Testis (tissue), 5 donors: ENCODE measurements at regions of chr5 and their contacts with region 1.

Region 1: GRCh38 chr5:32585446-32586275 is at the start of gene SUB1:
- DNase-seq: peak; percentile 95
- H3K4me3 ChIP-seq: peak within 1 kb of the TSS; percentile 100
- H3K27ac ChIP-seq: peak within 1 kb of the TSS; percentile 100
- H3K4me1 ChIP-seq: peaks cover 15% of the 10 kb centered on the region
- H3K27me3 ChIP-seq: no peaks in the 10 kb centered on the region
- CTCF ChIP-seq: peak in 1 of 3 experiments; percentile 9
- POLR2A ChIP-seq: peak; percentile 68
- total RNA-seq, gene SUB1: 147 to 210 TPM

Region 2: DNA sequence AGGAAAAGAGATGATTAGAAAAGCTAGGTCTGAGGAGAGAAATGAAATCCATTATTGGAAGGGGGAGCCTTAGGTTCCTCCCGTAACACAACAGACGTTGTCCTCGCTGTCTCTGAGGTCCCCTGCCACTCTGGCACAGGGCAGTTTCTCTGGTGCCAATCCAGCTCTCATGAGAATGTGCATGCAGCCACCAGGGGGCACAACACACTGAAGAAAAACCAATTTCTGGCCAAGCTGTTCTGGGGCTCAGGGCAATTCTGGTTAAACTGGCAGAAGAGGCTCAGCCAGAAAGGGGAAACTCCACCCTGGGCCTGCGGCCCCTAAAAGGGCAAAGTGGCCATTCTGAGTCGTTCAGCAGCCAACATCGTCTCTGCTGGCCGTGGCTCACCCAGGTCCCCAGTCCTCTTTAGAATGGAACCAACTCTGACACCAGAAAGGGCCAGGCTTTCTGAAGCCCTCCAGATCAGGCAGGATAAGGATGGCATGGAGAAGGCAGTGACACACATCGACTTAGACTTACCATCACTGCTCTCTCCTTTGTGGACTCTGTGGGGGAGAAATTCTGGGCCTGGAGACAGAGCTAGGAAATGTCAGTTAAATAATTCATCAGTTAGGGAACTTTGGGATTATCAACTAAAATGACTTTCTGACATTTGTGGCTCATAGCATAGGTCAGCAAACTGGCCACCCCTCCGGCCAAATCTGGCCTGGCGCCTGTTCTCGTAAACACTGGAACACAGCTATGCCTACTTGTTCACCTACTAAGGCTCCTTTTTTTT is 353.0 kb before region 1 on chr5:
- intact Hi-C with region 1: loop called (anchors 10 kb)
- DNase-seq: peak; percentile 83
- H3K4me3 ChIP-seq: no peak overlapping the region
- H3K27ac ChIP-seq: peak overlapping the region; percentile 44 to 48
- H3K4me1 ChIP-seq: peaks cover 25% of the 10 kb centered on the region
- H3K27me3 ChIP-seq: no peaks in the 10 kb centered on the region
- CTCF ChIP-seq: peak; percentile 76 to 90 (median 89)
- POLR2A ChIP-seq: no peak

Region 3: DNA sequence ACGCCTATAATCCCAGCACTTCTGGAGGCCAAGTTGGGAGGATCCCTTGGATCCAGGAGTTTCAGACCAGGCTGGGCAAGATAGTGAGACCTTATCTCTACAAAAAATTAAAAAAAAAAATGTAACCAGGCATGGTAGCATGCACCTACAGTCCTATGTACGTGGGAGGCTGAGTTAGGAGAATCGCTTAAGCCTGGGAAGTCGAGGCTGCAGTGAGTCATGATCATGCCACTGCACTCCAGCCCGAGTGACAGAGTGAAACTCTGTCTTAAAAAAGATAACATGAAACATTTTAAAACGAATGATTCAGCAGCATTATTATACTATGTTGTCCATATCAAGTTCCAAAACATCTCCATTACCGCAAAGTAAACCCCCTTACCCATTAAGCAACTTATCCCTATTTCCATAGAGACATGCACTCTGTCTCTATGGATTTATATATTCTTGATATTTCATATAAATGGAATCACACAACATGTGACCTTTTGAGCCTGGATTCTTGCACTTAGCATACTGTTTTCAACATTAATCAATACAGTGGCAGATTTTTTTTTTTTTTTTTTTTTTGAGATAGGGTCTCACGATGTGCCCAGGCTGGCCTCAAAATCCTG is 216.0 kb before region 1 on chr5:
- intact Hi-C with region 1: no loop called
- DNase-seq: no peak
- H3K4me3 ChIP-seq: no peak overlapping the region
- H3K27ac ChIP-seq: no peak overlapping the region
- H3K4me1 ChIP-seq: no peaks in the 10 kb centered on the region
- H3K27me3 ChIP-seq: no peaks in the 10 kb centered on the region
- CTCF ChIP-seq: no peak
- POLR2A ChIP-seq: no peak

Region 4: GRCh38 chr5:32489791-32490582 is 95.7 kb before region 1 on chr5:
- intact Hi-C with region 1: loop called (anchors 5 kb)
- DNase-seq: peak; percentile 89
- H3K4me3 ChIP-seq: no peak overlapping the region
- H3K27ac ChIP-seq: no peak overlapping the region
- H3K4me1 ChIP-seq: peaks cover 4% of the 10 kb centered on the region
- H3K27me3 ChIP-seq: no peaks in the 10 kb centered on the region
- CTCF ChIP-seq: peak; percentile 68 to 80 (median 79)
- POLR2A ChIP-seq: no peak